ENCODE measurements at regions of chr2 and their contacts with region 1.

Region 1: DNA sequence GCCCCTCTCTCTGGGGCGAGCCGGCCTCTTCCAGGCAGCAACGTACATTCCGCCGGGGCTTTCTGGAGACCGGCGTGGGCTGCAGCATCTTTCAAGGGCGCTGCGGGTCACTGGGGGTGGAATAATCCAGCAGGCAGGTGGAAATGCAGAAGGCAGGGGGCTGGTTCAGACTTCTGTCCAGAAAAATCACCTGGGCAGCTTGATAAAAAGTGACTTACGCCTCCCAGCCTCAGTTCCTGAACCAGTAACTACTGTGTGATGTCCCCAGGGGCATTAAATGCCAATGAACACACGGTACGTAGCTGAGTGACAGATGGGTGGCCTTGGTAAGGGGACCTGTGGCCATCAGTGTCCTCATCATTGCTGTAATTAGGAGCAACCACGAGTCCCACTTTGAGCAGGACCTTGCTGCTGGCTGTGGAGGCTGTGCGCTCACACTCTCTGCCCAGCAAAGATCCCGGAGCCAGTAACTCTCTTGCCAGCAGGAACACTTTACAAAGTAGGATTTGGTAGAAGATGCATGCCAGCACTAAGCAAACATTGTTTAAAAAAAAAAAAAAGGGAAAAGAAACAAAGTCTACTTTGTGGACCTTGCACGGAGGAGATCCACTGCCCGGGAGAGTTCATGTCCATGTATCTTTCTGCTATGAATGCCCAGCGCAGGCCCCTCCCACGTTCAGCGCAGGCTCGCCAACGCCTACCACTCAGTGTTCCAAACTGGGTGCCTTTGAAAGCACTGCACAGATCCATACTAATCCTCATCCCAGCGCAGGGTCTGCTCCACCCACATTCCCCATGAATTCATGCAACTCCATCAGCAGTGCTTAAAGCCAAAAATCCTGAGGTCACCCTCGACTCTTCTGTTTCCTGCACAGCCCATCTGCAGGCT is 177.3 kb downstream of the HDAC4 start:
- DNase-seq: peak; percentile 75 to 89
- ATAC-seq: peak; percentile 53
- H3K4me3 ChIP-seq: no peak overlapping the region
- H3K27ac ChIP-seq: peak overlapping the region; percentile 87 to 92
- H3K4me1 ChIP-seq: peaks cover 0 to 2% of the 10 kb centered on the region in 2 donors
- H3K27me3 ChIP-seq: no peaks in the 10 kb centered on the region

Region 2: GRCh38 chr2:239267288-239267951 is 43.9 kb after region 1 on chr2:
- intact Hi-C with region 1: loop called (anchors 1 to 5 kb)
- DNase-seq: peak; percentile 85 to 92
- ATAC-seq: peak; percentile 69
- H3K4me3 ChIP-seq: no peak overlapping the region
- H3K27ac ChIP-seq: peak overlapping the region; percentile 23 to 92
- H3K4me1 ChIP-seq: peaks cover 0 to 1% of the 10 kb centered on the region in 2 donors
- H3K27me3 ChIP-seq: no peaks in the 10 kb centered on the region

Region 3: DNA sequence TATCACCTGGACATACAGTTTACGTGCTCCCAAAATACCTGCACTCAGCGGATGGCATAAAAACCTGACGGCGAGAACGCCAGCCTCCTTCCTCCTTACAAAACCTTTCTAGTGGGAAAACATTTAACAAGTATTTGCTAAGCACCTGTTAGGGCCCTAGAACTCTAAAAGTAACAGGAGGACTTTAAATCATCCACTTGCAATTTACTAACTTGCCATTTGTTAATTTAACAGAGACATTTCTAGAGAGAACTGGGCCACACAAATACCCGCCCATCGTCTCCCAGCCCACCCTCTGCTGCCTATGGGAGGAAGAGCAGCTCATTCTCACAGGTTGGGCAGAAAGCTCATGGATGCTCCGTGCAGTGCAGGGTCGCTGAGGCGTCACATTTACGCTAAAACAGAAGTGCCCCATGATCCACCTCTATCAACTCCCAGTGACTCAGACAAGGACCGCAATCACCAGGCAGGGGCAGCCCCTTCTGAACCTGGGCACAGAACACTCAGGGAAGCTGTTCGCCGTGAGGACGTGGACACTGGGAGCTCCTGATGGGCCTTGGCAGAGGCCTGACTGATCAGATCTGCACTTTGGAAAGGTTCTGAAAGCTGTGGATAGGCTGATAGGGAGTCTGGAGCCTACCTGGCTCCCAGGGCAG is 70.3 kb after region 1 on chr2:
- intact Hi-C with region 1: loop called in 1 of 2 experiments (anchors 5 kb)
- DNase-seq: peak; percentile 19 to 69
- ATAC-seq: no peak
- H3K4me3 ChIP-seq: no peak overlapping the region
- H3K27ac ChIP-seq: no peak overlapping the region
- H3K4me1 ChIP-seq: peaks cover 0 to 3% of the 10 kb centered on the region in 2 donors
- H3K27me3 ChIP-seq: no peaks in the 10 kb centered on the region

Region 4: GRCh38 chr2:239523954-239524330 is 300.4 kb after region 1 on chr2:
- intact Hi-C with region 1: no loop called
- DNase-seq: no peak
- ATAC-seq: peak; percentile 62
- H3K4me3 ChIP-seq: no peak overlapping the region
- H3K27ac ChIP-seq: no peak overlapping the region
- H3K4me1 ChIP-seq: no peaks in the 10 kb centered on the region
- H3K27me3 ChIP-seq: no peaks in the 10 kb centered on the region

Measured in aorta (tissue), 5 donors.